ENCODE measurements at regions of chr1 and their contacts with region 1.

Region 1: GRCh38 chr1:205591522-205592351 is 40.1 kb downstream of the ELK4 start:
- DNase-seq: peak; percentile 59
- ATAC-seq: peak; percentile 79
- H3K4me3 ChIP-seq: peak overlapping the region; percentile 66; the same call in 1 of the 2 replicates
- H3K27ac ChIP-seq: peak overlapping the region; percentile 71
- H3K4me1 ChIP-seq: peaks cover 36% of the 10 kb centered on the region
- H3K27me3 ChIP-seq: no peaks in the 10 kb centered on the region
- CTCF ChIP-seq: peak; percentile 98 to 99 (median 99); a peak in 5 of 6 replicates
- EP300 ChIP-seq: no peak
- POLR2A ChIP-seq: peak; percentile 69
- RAD21 ChIP-seq: peak; percentile 96

Region 2: GRCh38 chr1:205472737-205473441 is 118.8 kb before region 1 on chr1:
- CTCF ChIA-PET with region 1: no interaction called
- POLR2A ChIA-PET with region 1: no interaction called
- RAD21 ChIA-PET with region 1: no interaction called
- SMC1A ChIA-PET with region 1: no interaction called
- in situ Hi-C with region 1: no loop called
- intact Hi-C with region 1: no loop called
- DNase-seq: no peak
- ATAC-seq: no peak
- H3K4me3 ChIP-seq: no peak overlapping the region
- H3K27ac ChIP-seq: no peak overlapping the region
- H3K4me1 ChIP-seq: no peaks in the 10 kb centered on the region
- H3K27me3 ChIP-seq: peaks cover 0 to 2% of the 10 kb centered on the region in 2 experiments; a peak in 1 of 4 replicates
- CTCF ChIP-seq: no peak
- EP300 ChIP-seq: no peak
- POLR2A ChIP-seq: no peak
- RAD21 ChIP-seq: no peak

Region 3: DNA sequence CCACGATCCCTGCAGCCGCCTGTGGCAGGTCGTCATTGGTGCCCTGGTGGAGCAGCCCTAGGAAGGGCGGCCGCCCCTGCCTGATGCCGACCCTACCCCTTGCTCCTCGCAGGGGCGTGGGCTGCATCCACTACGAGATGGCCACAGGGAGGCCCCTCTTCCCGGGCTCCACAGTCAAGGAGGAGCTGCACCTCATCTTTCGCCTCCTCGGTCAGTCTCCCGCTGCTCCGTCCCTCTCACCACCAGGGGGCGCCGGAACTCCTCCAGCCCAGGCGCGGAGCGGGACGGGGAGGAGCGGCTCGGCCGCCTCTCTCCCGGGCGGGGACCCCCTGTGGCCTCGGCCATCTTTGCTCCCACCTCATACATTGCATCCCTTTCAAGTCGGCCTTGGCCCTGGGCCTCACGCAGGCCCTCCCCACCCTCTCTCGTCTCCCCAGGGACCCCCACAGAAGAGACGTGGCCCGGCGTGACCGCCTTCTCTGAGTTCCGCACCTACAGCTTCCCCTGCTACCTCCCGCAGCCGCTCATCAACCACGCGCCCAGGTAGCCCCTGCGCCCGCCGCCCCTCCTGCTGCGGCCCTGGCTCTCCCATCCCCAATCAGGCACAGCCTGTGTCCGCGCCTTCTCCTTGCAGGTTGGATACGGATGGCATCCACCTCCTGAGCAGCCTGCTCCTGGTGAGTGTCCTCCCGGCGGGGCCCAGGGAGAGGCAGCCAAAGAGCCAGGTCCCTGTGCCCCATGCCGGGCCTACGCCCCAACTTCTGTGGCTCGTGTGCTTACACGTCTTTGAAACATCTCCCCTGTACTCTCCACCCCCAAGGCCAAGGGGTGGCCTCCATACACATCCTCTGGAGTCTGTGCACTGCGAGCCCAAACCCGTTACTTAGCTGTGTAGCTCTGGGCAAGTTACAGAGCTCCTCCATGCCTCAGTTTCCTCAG is 62.6 kb before region 1 on chr1:
- CTCF ChIA-PET with region 1: interaction called, 50 read pairs
- POLR2A ChIA-PET with region 1: interaction called, 3 read pairs
- RAD21 ChIA-PET with region 1: interaction called, 13 read pairs
- SMC1A ChIA-PET with region 1: interaction called, 23 read pairs
- in situ Hi-C with region 1: no loop called
- intact Hi-C with region 1: loop called (anchors 5 kb)
- DNase-seq: no peak
- ATAC-seq: peak; percentile 93
- H3K4me3 ChIP-seq: no peak overlapping the region
- H3K27ac ChIP-seq: no peak overlapping the region
- H3K4me1 ChIP-seq: no peaks in the 10 kb centered on the region
- H3K27me3 ChIP-seq: peaks cover 2 to 3% of the 10 kb centered on the region in 2 experiments; a peak in 3 of 4 replicates
- CTCF ChIP-seq: peak; percentile 78 to 96 (median 92)
- EP300 ChIP-seq: no peak
- POLR2A ChIP-seq: no peak
- RAD21 ChIP-seq: peak; percentile 78

Region 4: DNA sequence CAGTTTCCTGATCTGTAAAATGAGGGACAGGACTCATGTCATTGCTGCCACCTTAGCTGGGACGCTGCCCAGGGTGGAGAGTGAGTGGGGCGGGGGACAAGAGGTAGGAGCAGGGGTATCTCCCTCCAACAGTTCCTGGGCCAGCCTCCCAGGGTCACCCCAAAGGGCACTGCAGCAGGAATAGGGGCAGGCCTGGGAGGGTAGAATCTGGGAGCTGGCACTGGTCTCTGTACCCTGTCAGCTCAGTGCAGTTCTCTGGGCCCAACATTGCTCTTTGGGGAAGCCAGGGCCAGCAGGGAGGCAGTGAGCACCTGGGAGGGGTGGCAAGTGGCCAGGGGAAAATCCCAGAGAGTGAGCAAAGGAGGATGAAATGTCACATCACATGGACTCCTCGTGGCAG is 15.7 kb before region 1 on chr1:
- CTCF ChIA-PET with region 1: interaction called, 14 read pairs
- POLR2A ChIA-PET with region 1: interaction called, 3 read pairs
- RAD21 ChIA-PET with region 1: interaction called, 3 read pairs
- SMC1A ChIA-PET with region 1: interaction called, 6 read pairs
- in situ Hi-C with region 1: no loop called
- intact Hi-C with region 1: no loop called
- DNase-seq: no peak
- ATAC-seq: no peak
- H3K4me3 ChIP-seq: no peak overlapping the region
- H3K27ac ChIP-seq: no peak overlapping the region
- H3K4me1 ChIP-seq: no peaks in the 10 kb centered on the region
- H3K27me3 ChIP-seq: peaks cover 0 to 4% of the 10 kb centered on the region in 2 experiments; a peak in 3 of 4 replicates
- CTCF ChIP-seq: no peak
- EP300 ChIP-seq: no peak
- POLR2A ChIP-seq: no peak
- RAD21 ChIP-seq: no peak

Region 5: DNA sequence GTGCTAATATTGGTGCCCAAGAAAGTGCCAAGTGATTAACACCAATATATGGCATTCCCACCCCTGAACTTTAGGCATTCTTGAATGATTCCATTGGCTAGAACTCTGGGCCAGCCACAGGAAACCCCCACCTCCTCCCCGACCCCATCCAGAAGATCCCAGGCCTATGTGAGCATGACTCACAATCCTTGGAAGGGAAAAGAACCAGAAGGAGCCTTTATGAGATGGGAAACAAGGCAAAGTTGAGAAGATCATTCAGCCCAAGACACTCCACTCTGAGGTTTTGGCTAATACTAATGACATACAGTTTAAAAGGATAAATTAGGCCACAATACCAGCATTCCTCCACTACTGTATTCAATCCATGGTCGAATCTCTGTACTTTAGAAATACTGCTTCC is 18.3 kb after region 1 on chr1:
- CTCF ChIA-PET with region 1: interaction called, 7 read pairs
- POLR2A ChIA-PET with region 1: interaction called, 5 read pairs
- RAD21 ChIA-PET with region 1: interaction called, 6 read pairs
- SMC1A ChIA-PET with region 1: interaction called, 15 read pairs
- in situ Hi-C with region 1: no loop called
- intact Hi-C with region 1: no loop called
- DNase-seq: no peak
- ATAC-seq: no peak
- H3K4me3 ChIP-seq: no peak overlapping the region
- H3K27ac ChIP-seq: no peak overlapping the region
- H3K4me1 ChIP-seq: peaks cover 6% of the 10 kb centered on the region; the same call in 1 of the 2 replicates
- H3K27me3 ChIP-seq: no peaks in the 10 kb centered on the region
- CTCF ChIP-seq: no peak
- EP300 ChIP-seq: no peak
- POLR2A ChIP-seq: no peak
- RAD21 ChIP-seq: no peak

Region 6: GRCh38 chr1:205626216-205626615 is 34.5 kb after region 1 on chr1:
- CTCF ChIA-PET with region 1: interaction called, 408 read pairs
- POLR2A ChIA-PET with region 1: interaction called, 80 read pairs
- RAD21 ChIA-PET with region 1: interaction called, 381 read pairs
- SMC1A ChIA-PET with region 1: interaction called, 301 read pairs
- in situ Hi-C with region 1: no loop called
- intact Hi-C with region 1: no loop called
- DNase-seq: no peak
- ATAC-seq: peak; percentile 7
- H3K4me3 ChIP-seq: peak overlapping the region; percentile 29; the same call in 1 of the 2 replicates
- H3K27ac ChIP-seq: peak overlapping the region; percentile 33; the same call in 1 of the 2 replicates
- H3K4me1 ChIP-seq: peaks cover 12% of the 10 kb centered on the region
- H3K27me3 ChIP-seq: no peaks in the 10 kb centered on the region
- CTCF ChIP-seq: no peak
- EP300 ChIP-seq: no peak
- POLR2A ChIP-seq: no peak
- RAD21 ChIP-seq: no peak

Region 7: DNA sequence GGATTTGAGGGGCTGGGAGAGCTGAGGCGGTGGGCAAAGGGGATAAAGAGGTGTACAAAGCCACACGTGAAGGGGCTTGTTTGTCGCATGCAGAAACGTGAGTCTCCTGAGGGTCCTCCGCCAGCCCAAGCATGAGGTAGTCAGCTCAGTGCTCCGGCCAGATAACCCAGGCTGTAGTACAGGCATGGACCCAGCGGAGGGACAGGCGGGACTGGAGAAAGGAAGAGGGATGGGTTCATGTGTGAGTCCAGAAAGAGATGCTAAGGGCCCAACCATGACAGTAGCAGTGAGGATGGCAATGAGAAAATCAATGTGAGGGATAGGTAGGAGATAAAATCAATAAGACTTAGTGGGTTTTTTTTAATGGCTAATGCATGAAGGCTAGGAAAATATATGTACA is 53.8 kb after region 1 on chr1:
- CTCF ChIA-PET with region 1: interaction called, 14 read pairs
- POLR2A ChIA-PET with region 1: interaction called, 4 read pairs
- RAD21 ChIA-PET with region 1: interaction called, 13 read pairs
- SMC1A ChIA-PET with region 1: interaction called, 10 read pairs
- in situ Hi-C with region 1: no loop called
- intact Hi-C with region 1: no loop called
- DNase-seq: no peak
- ATAC-seq: no peak
- H3K4me3 ChIP-seq: no peak overlapping the region
- H3K27ac ChIP-seq: no peak overlapping the region
- H3K4me1 ChIP-seq: no peaks in the 10 kb centered on the region
- H3K27me3 ChIP-seq: no peaks in the 10 kb centered on the region
- CTCF ChIP-seq: no peak
- EP300 ChIP-seq: no peak
- POLR2A ChIP-seq: no peak
- RAD21 ChIP-seq: no peak

Region 8: DNA sequence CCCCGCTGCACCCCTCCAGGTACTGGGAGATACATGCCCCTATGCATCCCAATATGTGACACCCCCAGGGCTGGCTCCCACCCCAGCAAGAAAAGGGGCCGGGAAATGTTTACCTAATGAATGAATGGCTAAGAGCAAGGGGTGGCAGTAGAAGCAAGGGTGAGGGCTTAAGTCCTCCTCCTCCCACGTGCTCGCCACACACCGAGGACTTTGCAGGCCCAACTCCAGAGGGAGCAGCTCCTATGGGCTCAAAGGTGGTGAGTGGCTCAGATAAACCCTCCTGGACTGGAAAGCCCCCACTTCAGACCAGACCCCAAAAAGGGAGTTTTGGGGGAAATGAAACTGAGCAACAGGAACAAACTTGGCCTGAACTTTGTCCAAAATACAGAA is 77.2 kb after region 1 on chr1:
- CTCF ChIA-PET with region 1: interaction called, 35 read pairs
- POLR2A ChIA-PET with region 1: interaction called, 6 read pairs
- RAD21 ChIA-PET with region 1: interaction called, 18 read pairs
- SMC1A ChIA-PET with region 1: interaction called, 42 read pairs
- in situ Hi-C with region 1: no loop called
- intact Hi-C with region 1: no loop called
- DNase-seq: peak; percentile 65
- ATAC-seq: peak; percentile 63
- H3K4me3 ChIP-seq: peak overlapping the region; percentile 51; the same call in 1 of the 2 replicates
- H3K27ac ChIP-seq: peak overlapping the region; percentile 71
- H3K4me1 ChIP-seq: peaks cover 80% of the 10 kb centered on the region
- H3K27me3 ChIP-seq: no peaks in the 10 kb centered on the region
- CTCF ChIP-seq: peak in 2 of 3 experiments; percentile 31 to 48; a peak in 3 of 6 replicates
- EP300 ChIP-seq: peak; percentile 22 to 61; a peak in 2 of 4 replicates
- POLR2A ChIP-seq: no peak
- RAD21 ChIP-seq: peak; percentile 30; the same call in 1 of the 2 replicates